Caco-2 (cell line): ENCODE measurements at regions of chr6 and their contacts with region 1.

Region 1: GRCh38 chr6:106799008-106799894 is 169.9 kb downstream of the QRSL1 start:
- DNase-seq: peak; percentile 84 to 92
- H3K4me3 ChIP-seq: no peak overlapping the region
- H3K4me3 Mint-ChIP-seq: peak overlapping the region; percentile 65
- H3K27ac Mint-ChIP-seq: peak overlapping the region; percentile 95
- H3K4me1 ChIP-seq: peaks cover 56% of the 10 kb centered on the region
- H3K4me1 Mint-ChIP-seq: peaks cover 24% of the 10 kb centered on the region
- H3K27me3 ChIP-seq: no peaks in the 10 kb centered on the region
- H3K27me3 Mint-ChIP-seq: no peaks in the 10 kb centered on the region
- CTCF ChIP-seq: no peak

Region 2: GRCh38 chr6:106608062-106608668 is 191.1 kb before region 1 on chr6:
- CTCF ChIA-PET with region 1: interaction called, 5 read pairs
- POLR2A ChIA-PET with region 1: no interaction called
- intact Hi-C with region 1: loop called (anchors 5 kb)
- DNase-seq: peak in 1 of 2 experiments; percentile 67
- H3K4me3 ChIP-seq: no peak overlapping the region
- H3K4me3 Mint-ChIP-seq: no peak overlapping the region
- H3K27ac Mint-ChIP-seq: no peak overlapping the region
- H3K4me1 ChIP-seq: no peaks in the 10 kb centered on the region
- H3K4me1 Mint-ChIP-seq: no peaks in the 10 kb centered on the region
- H3K27me3 ChIP-seq: no peaks in the 10 kb centered on the region
- H3K27me3 Mint-ChIP-seq: no peaks in the 10 kb centered on the region
- CTCF ChIP-seq: peak; percentile 54 to 56

Region 3: DNA sequence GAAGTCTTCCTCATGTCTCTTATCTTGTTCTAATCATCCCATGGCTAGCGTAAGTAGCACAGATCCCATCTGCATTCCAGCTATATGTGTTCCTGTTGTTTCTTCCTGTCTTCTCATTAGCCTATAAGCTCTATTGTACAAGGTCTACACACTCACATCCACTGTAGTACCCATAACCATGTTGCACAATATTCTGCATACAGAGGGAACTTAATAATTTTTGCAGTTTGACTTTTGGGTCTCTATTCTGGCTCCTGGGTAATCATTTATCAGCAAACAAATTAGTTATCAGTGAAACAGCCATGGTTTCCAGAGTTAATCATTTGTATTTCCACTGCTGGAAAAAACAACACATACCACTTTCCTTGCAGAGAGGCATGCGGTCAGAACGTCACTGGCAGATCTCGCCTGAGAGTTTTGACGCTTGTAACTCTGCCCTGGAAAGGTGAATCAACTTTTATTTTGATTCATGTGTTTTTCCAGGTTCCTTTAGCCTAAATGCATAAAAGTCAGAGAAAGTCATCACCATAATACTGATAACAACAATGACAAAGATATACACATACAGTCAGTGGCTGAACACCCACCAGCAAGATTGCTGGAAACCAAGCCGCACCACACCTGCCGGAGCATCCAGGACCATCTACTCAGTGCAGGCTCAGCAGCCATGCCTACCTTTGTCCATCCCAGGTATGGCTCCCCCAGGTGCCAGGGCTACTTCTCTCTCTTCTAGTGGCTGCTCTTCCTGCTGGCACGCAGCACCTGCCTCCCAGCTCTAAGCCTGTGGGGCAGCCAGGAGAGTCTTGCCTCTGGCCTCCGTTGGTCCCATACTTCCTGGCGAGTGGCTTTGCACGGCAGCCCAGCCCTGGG is 11.7 kb before region 1 on chr6:
- CTCF ChIA-PET with region 1: no interaction called
- POLR2A ChIA-PET with region 1: no interaction called
- intact Hi-C with region 1: loop called (anchors 1 kb)
- DNase-seq: peak; percentile 41 to 47
- H3K4me3 ChIP-seq: no peak overlapping the region
- H3K4me3 Mint-ChIP-seq: no peak overlapping the region
- H3K27ac Mint-ChIP-seq: peak overlapping the region; percentile 45
- H3K4me1 ChIP-seq: peaks cover 13% of the 10 kb centered on the region
- H3K4me1 Mint-ChIP-seq: peaks cover 9% of the 10 kb centered on the region
- H3K27me3 ChIP-seq: no peaks in the 10 kb centered on the region
- H3K27me3 Mint-ChIP-seq: no peaks in the 10 kb centered on the region
- CTCF ChIP-seq: no peak

Region 4: GRCh38 chr6:106883808-106884262 is 84.6 kb after region 1 on chr6:
- CTCF ChIA-PET with region 1: no interaction called
- POLR2A ChIA-PET with region 1: no interaction called
- intact Hi-C with region 1: loop called (anchors 2 kb)
- DNase-seq: no peak
- H3K4me3 ChIP-seq: no peak overlapping the region
- H3K4me3 Mint-ChIP-seq: no peak overlapping the region
- H3K27ac Mint-ChIP-seq: no peak overlapping the region
- H3K4me1 ChIP-seq: peaks cover 35% of the 10 kb centered on the region
- H3K4me1 Mint-ChIP-seq: peaks cover 31% of the 10 kb centered on the region
- H3K27me3 ChIP-seq: no peaks in the 10 kb centered on the region
- H3K27me3 Mint-ChIP-seq: no peaks in the 10 kb centered on the region
- CTCF ChIP-seq: peak; percentile 18

Region 5: DNA sequence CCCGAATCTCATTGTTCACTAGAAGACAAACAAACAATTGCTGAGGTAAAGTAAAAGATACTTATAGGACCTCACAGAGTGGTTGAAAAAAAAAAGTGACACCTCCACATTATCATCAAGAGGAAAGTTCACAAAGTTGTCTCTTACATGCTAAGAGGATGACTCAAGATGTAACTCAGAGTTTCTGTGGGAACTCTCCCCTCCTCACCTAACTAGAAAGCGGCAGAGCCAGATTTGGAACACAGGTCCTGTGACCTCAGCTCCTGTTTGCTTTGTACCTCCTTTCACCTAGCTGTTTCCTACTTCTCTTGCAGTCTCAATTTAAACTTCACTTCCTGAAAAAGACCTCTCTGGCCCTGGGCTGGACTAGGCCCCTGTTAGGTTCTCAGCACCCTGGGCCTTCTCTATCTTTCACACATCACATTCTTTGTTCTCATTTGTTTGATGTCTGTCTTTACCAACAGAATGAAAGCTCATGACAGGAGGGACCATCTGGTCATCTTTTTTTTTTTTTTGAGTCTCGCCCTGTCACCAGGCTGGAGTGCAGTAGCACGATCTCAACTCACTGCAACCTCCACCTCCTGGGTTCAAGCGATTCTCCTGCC is 114.5 kb after region 1 on chr6:
- CTCF ChIA-PET with region 1: no interaction called
- POLR2A ChIA-PET with region 1: interaction called, 5 read pairs
- intact Hi-C with region 1: loop called (anchors 1 kb)
- DNase-seq: peak in 1 of 2 experiments; percentile 34
- H3K4me3 ChIP-seq: no peak overlapping the region
- H3K4me3 Mint-ChIP-seq: peak overlapping the region; percentile 15
- H3K27ac Mint-ChIP-seq: peak overlapping the region; percentile 86
- H3K4me1 ChIP-seq: peaks cover 43% of the 10 kb centered on the region
- H3K4me1 Mint-ChIP-seq: peaks cover 36% of the 10 kb centered on the region
- H3K27me3 ChIP-seq: no peaks in the 10 kb centered on the region
- H3K27me3 Mint-ChIP-seq: no peaks in the 10 kb centered on the region
- CTCF ChIP-seq: no peak